Dorsolateral prefrontal cortex (tissue), 120 donors: ENCODE measurements at regions of chr11 and their contacts with region 1.

Region 1: GRCh38 chr11:65766535-65766934 is 14.2 kb downstream of the AP5B1 start:
- DNase-seq: no peak
- H3K4me3 ChIP-seq: no peak overlapping the region
- H3K27ac ChIP-seq: no peak overlapping the region
- H3K27me3 ChIP-seq: no peaks in the 10 kb centered on the region
- CTCF ChIP-seq: no peak

Region 2: GRCh38 chr11:65530157-65530496 is 236.4 kb before region 1 on chr11:
- intact Hi-C with region 1: no loop called
- DNase-seq: no peak
- H3K4me3 ChIP-seq: no peak overlapping the region
- H3K27ac ChIP-seq: no peak overlapping the region
- H3K27me3 ChIP-seq: no peaks in the 10 kb centered on the region
- CTCF ChIP-seq: peak in 1 of 56 donors; percentile 6

Region 3: DNA sequence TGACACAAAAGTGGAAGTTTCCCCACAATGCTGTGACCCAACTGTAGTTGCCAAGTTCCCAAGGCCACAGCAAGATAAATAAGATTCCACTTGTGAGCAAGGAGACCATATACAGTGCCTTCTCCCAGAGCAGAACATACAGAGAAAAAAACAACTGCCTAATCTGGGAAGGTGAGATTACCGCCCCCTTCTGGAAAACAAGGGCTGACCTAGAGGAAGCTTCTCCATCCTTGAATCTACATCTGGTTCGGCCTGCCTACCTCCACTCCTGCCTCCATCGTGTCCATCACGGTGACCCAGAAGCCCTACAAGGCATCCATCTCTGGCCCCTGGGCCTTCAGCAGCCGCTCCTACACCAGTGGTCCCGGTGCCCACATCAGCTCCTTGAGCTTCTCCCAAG is 39.9 kb before region 1 on chr11:
- intact Hi-C with region 1: loop called in 1 of 2 experiments (anchors 5 kb)
- DNase-seq: no peak
- H3K4me3 ChIP-seq: no peak overlapping the region
- H3K27ac ChIP-seq: no peak overlapping the region
- H3K27me3 ChIP-seq: no peaks in the 10 kb centered on the region
- CTCF ChIP-seq: no peak